HCT116 (cell line): ENCODE measurements at regions of chr21 and their contacts with region 1.

Region 1: GRCh38 chr21:42117229-42117966 is 46.3 kb downstream of the UMODL1 start:
- DNase-seq: peak; percentile 54
- ATAC-seq: peak; percentile 95
- H3K4me3 ChIP-seq: peak overlapping the region; percentile 26 to 28
- H3K27ac ChIP-seq: no peak overlapping the region
- H3K4me1 ChIP-seq: peaks cover 0 to 5% of the 10 kb centered on the region in 2 experiments; a peak in 1 of 4 replicates
- H3K27me3 ChIP-seq: peaks cover 21% of the 10 kb centered on the region; the same call in 1 of the 2 replicates
- CTCF ChIP-seq: peak; percentile 72 to 91 (median 91); a peak in 5 of 6 replicates
- POLR2A ChIP-seq: no peak
- RAD21 ChIP-seq: peak; percentile 87

Region 2: GRCh38 chr21:41816220-41817165 is 300.9 kb before region 1 on chr21:
- CTCF ChIA-PET with region 1: interaction called, 20 read pairs
- POLR2A ChIA-PET with region 1: no interaction called
- RAD21 ChIA-PET with region 1: interaction called in 1 of 2 experiments, 4 read pairs
- intact Hi-C with region 1: loop called (anchors 1 kb)
- DNase-seq: no peak
- ATAC-seq: peak; percentile 87
- H3K4me3 ChIP-seq: no peak overlapping the region
- H3K27ac ChIP-seq: no peak overlapping the region
- H3K4me1 ChIP-seq: no peaks in the 10 kb centered on the region
- H3K27me3 ChIP-seq: no peaks in the 10 kb centered on the region
- CTCF ChIP-seq: peak; percentile 52 to 77 (median 76); a peak in 5 of 6 replicates
- POLR2A ChIP-seq: no peak
- RAD21 ChIP-seq: peak; percentile 74

Region 3: GRCh38 chr21:42009831-42010523 is 107.4 kb before region 1 on chr21 and contains the start of gene ZBTB21:
- CTCF ChIA-PET with region 1: interaction called, 6 read pairs
- POLR2A ChIA-PET with region 1: no interaction called
- RAD21 ChIA-PET with region 1: no interaction called
- intact Hi-C with region 1: loop called (anchors 5 kb)
- DNase-seq: peak; percentile 95
- ATAC-seq: peak; percentile 91
- H3K4me3 ChIP-seq: peak within 1 kb of the TSS; percentile 76 to 79
- H3K27ac ChIP-seq: peak within 1 kb of the TSS; percentile 92
- H3K4me1 ChIP-seq: peaks cover 9 to 11% of the 10 kb centered on the region in 2 experiments
- H3K27me3 ChIP-seq: no peaks in the 10 kb centered on the region
- CTCF ChIP-seq: no peak
- POLR2A ChIP-seq: peak; percentile 75
- RAD21 ChIP-seq: no peak
- total RNA-seq, gene ZBTB21: 28.7 TPM